MCF 10A (cell line): ENCODE measurements at regions of chr7 and their contacts with region 1.

Region 1: GRCh38 chr7:134432296-134433152 is 26.4 kb downstream of the AKR1B1 start:
- DNase-seq: peak; percentile 91
- H3K4me3 Mint-ChIP-seq: peak overlapping the region; percentile 67
- H3K27ac Mint-ChIP-seq: no peak overlapping the region
- H3K4me1 Mint-ChIP-seq: peaks cover 17% of the 10 kb centered on the region
- H3K27me3 Mint-ChIP-seq: no peaks in the 10 kb centered on the region
- CTCF ChIP-seq: peak; percentile 66

Region 2: GRCh38 chr7:134448700-134449229 is 16.2 kb after region 1 on chr7:
- CTCF ChIA-PET with region 1: interaction called, 41 read pairs
- POLR2A ChIA-PET with region 1: interaction called, 6 read pairs
- intact Hi-C with region 1: no loop called
- DNase-seq: peak; percentile 83
- H3K4me3 Mint-ChIP-seq: no peak overlapping the region
- H3K27ac Mint-ChIP-seq: peak overlapping the region; percentile 89
- H3K4me1 Mint-ChIP-seq: peaks cover 25% of the 10 kb centered on the region
- H3K27me3 Mint-ChIP-seq: no peaks in the 10 kb centered on the region
- CTCF ChIP-seq: no peak

Region 3: GRCh38 chr7:134480736-134481135 is 48.2 kb after region 1 on chr7:
- CTCF ChIA-PET with region 1: interaction called, 40 read pairs
- POLR2A ChIA-PET with region 1: interaction called, 4 read pairs
- intact Hi-C with region 1: loop called (anchors 1 kb)
- DNase-seq: peak; percentile 67
- H3K4me3 Mint-ChIP-seq: no peak overlapping the region
- H3K27ac Mint-ChIP-seq: no peak overlapping the region
- H3K4me1 Mint-ChIP-seq: peaks cover 15% of the 10 kb centered on the region
- H3K27me3 Mint-ChIP-seq: no peaks in the 10 kb centered on the region
- CTCF ChIP-seq: no peak

Region 4: GRCh38 chr7:134514663-134515062 is 82.1 kb after region 1 on chr7:
- CTCF ChIA-PET with region 1: interaction called, 256 read pairs
- POLR2A ChIA-PET with region 1: interaction called, 17 read pairs
- intact Hi-C with region 1: loop called (anchors 1 kb)
- DNase-seq: peak; percentile 87
- H3K4me3 Mint-ChIP-seq: no peak overlapping the region
- H3K27ac Mint-ChIP-seq: no peak overlapping the region
- H3K4me1 Mint-ChIP-seq: peaks cover 29% of the 10 kb centered on the region
- H3K27me3 Mint-ChIP-seq: no peaks in the 10 kb centered on the region
- CTCF ChIP-seq: peak; percentile 77

Region 5: GRCh38 chr7:134553976-134554375 is 121.5 kb after region 1 on chr7:
- CTCF ChIA-PET with region 1: interaction called, 26 read pairs
- POLR2A ChIA-PET with region 1: no interaction called
- intact Hi-C with region 1: no loop called
- DNase-seq: peak; percentile 45
- H3K4me3 Mint-ChIP-seq: no peak overlapping the region
- H3K27ac Mint-ChIP-seq: no peak overlapping the region
- H3K4me1 Mint-ChIP-seq: peaks cover 3% of the 10 kb centered on the region
- H3K27me3 Mint-ChIP-seq: no peaks in the 10 kb centered on the region
- CTCF ChIP-seq: no peak

Region 6: GRCh38 chr7:134605973-134606923 is 173.7 kb after region 1 on chr7:
- CTCF ChIA-PET with region 1: interaction called, 52 read pairs
- POLR2A ChIA-PET with region 1: interaction called, 5 read pairs
- intact Hi-C with region 1: loop called (anchors 1 kb)
- DNase-seq: peak; percentile 73
- H3K4me3 Mint-ChIP-seq: peak overlapping the region; percentile 21
- H3K27ac Mint-ChIP-seq: peak overlapping the region; percentile 65
- H3K4me1 Mint-ChIP-seq: peaks cover 6% of the 10 kb centered on the region
- H3K27me3 Mint-ChIP-seq: no peaks in the 10 kb centered on the region
- CTCF ChIP-seq: peak; percentile 90

Region 7: DNA sequence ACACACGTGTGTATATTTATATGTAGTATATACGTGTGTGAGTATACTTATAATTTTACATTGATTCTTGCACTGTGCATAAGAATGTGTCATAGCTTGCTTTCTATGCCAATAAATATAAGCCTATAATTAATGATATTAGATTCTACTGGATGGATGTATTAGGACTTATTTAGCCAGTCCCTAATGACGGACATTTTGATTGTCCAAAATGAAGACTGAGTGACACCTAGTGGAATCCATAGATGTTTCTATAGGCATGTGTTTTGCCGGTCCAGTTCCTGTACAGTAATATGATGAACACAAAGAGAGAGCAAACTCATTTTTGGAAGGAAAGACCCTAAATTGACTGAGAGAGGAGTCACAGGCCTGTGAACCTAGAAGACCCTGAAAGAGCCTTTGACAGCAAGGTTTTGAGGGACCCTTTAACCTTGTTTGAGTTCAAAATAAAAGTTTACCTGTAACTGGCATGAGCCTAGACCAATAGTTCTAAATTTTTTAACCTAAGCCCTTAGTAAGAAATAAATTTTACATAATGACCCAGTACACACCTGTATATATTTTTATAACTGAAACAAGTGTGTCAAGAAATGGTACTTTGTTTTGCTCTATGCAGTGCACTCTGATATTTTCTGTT is 511.4 kb after region 1 on chr7:
- CTCF ChIA-PET with region 1: interaction called, 5 read pairs
- POLR2A ChIA-PET with region 1: no interaction called
- intact Hi-C with region 1: loop called (anchors 10 kb)
- DNase-seq: peak; percentile 42
- H3K4me3 Mint-ChIP-seq: no peak overlapping the region
- H3K27ac Mint-ChIP-seq: no peak overlapping the region
- H3K4me1 Mint-ChIP-seq: peaks cover 10% of the 10 kb centered on the region
- H3K27me3 Mint-ChIP-seq: no peaks in the 10 kb centered on the region
- CTCF ChIP-seq: peak; percentile 52

Region 8: GRCh38 chr7:135206941-135207391 is 774.4 kb after region 1 on chr7:
- CTCF ChIA-PET with region 1: no interaction called
- POLR2A ChIA-PET with region 1: no interaction called
- intact Hi-C with region 1: no loop called
- DNase-seq: no peak
- H3K4me3 Mint-ChIP-seq: no peak overlapping the region
- H3K27ac Mint-ChIP-seq: no peak overlapping the region
- H3K4me1 Mint-ChIP-seq: peaks cover 5% of the 10 kb centered on the region
- H3K27me3 Mint-ChIP-seq: no peaks in the 10 kb centered on the region
- CTCF ChIP-seq: no peak